ENCODE measurements at regions of chr11 and their contacts with region 1.

Region 1: DNA sequence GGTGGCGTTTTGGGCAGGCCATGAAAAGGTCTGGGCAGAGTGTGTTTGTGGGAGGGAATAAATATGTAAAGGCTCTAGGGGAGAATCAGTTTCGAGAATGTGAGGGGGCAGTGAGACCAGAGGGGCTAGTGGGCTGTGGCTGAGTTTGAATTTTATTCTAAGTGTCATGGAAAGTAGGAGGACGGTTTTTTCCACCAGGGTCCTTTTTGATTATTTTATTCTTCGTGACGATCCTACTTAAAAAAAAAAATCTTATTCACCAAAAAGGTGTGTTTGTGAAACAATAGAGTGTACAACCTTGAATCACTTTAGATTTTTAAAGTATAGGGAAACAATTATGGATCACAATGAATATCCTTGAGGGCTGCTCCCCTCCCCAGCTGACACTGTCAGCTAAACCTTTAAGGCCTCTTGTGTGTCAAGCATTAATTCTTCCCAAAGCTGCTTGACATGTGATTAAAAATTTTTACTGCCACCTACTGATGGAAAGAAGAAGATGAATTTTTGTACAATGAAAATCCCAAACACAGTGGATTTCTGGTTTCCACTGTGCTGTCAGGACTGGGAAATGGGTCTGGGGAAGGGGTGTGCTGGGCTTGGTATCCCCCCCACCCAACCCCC is 107.5 kb upstream of the OR4B1 start:
- DNase-seq: peak in 1 of 35 experiments; percentile 61
- ATAC-seq: peak; percentile 37 to 52 (median 50)
- H3K4me3 ChIP-seq: peak overlapping the region; percentile 40 to 43
- H3K4me3 Mint-ChIP-seq: peak overlapping the region in 2 of 3 donors; percentile 22 to 78
- H3K27ac ChIP-seq: peak overlapping the region; percentile 60
- H3K27ac Mint-ChIP-seq: peak overlapping the region; percentile 81 to 88
- H3K4me1 ChIP-seq: peaks cover 16 to 38% of the 10 kb centered on the region in 2 experiments
- H3K4me1 Mint-ChIP-seq: peaks cover 51 to 58% (median 52%) of the 10 kb centered on the region in 3 donors
- H3K27me3 ChIP-seq: no peaks in the 10 kb centered on the region
- H3K27me3 Mint-ChIP-seq: no peaks in the 10 kb centered on the region

Region 2: GRCh38 chr11:47869546-47870393 is 239.4 kb before region 1 on chr11:
- CTCF ChIA-PET with region 1: interaction called in 1 of 2 experiments, 10 read pairs
- POLR2A ChIA-PET with region 1: interaction called in 1 of 2 experiments, 6 read pairs
- DNase-seq: no peak
- ATAC-seq: no peak
- H3K4me3 ChIP-seq: no peak overlapping the region
- H3K4me3 Mint-ChIP-seq: no peak overlapping the region
- H3K27ac ChIP-seq: no peak overlapping the region
- H3K27ac Mint-ChIP-seq: peak overlapping the region in 1 of 2 donors; percentile 68
- H3K4me1 ChIP-seq: no peaks in the 10 kb centered on the region
- H3K4me1 Mint-ChIP-seq: peaks cover 7 to 15% (median 12%) of the 10 kb centered on the region in 3 donors
- H3K27me3 ChIP-seq: no peaks in the 10 kb centered on the region
- H3K27me3 Mint-ChIP-seq: no peaks in the 10 kb centered on the region

Region 3: DNA sequence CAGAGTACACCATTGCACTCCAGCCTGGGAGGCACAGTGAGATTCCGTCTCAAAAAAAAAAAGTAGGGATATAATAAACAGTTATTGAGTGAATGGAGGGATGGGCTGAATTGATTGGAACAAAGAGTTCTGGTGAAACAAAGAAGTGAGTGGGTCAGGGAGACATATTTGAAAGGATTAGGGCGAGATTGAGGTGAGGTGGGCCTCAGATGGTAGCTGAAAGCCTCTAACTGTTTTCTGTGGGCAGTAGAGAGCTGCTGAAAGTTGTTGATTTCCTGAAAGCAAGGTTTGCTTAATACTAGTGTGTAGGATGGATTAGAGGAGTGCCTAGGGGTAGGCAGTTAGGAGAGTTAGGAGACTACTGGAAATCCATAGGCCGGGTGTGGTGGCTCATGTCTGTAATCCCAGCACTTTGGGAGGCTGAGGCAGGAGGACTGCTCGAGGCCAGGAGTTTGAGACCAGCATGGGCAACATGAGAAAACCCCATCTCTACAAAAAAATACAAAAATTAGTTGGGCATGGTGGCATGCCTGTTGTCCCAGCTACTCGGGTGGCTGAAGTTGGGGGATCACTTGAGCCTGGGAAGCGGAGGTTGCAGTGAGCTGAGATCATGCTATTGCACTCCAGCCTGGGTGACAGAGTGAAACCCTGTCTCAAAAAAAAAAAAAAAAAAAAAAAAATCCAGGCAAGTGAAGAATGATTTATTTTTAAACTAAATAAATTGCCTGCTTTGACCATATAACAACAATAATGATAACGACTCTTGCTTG is 170.2 kb before region 1 on chr11:
- CTCF ChIA-PET with region 1: interaction called, 95 to 146 read pairs
- POLR2A ChIA-PET with region 1: interaction called, 3 read pairs
- DNase-seq: no peak
- ATAC-seq: no peak
- H3K4me3 ChIP-seq: no peak overlapping the region
- H3K4me3 Mint-ChIP-seq: no peak overlapping the region
- H3K27ac ChIP-seq: no peak overlapping the region
- H3K27ac Mint-ChIP-seq: no peak overlapping the region
- H3K4me1 ChIP-seq: peaks cover 0 to 11% of the 10 kb centered on the region in 2 experiments
- H3K4me1 Mint-ChIP-seq: peaks cover 7 to 24% (median 17%) of the 10 kb centered on the region in 3 donors
- H3K27me3 ChIP-seq: no peaks in the 10 kb centered on the region
- H3K27me3 Mint-ChIP-seq: no peaks in the 10 kb centered on the region

Region 4: GRCh38 chr11:48055292-48056132 is 53.6 kb before region 1 on chr11:
- CTCF ChIA-PET with region 1: interaction called, 3 to 10 read pairs
- POLR2A ChIA-PET with region 1: interaction called, 3 to 4 read pairs
- DNase-seq: peak; percentile 34 to 83 (median 61)
- ATAC-seq: peak; percentile 78 to 90 (median 86)
- H3K4me3 ChIP-seq: peak overlapping the region; percentile 19 to 35
- H3K4me3 Mint-ChIP-seq: peak overlapping the region; percentile 64 to 78 (median 70)
- H3K27ac ChIP-seq: peak overlapping the region; percentile 62
- H3K27ac Mint-ChIP-seq: peak overlapping the region; percentile 74 to 83
- H3K4me1 ChIP-seq: peaks cover 57 to 82% of the 10 kb centered on the region in 2 experiments
- H3K4me1 Mint-ChIP-seq: peaks cover 88 to 89% (median 89%) of the 10 kb centered on the region in 3 donors
- H3K27me3 ChIP-seq: no peaks in the 10 kb centered on the region
- H3K27me3 Mint-ChIP-seq: no peaks in the 10 kb centered on the region